CD8-positive, alpha-beta memory T cell (primary cell): ENCODE measurements at regions of chr14 and their contacts with region 1.

Region 1: GRCh38 chr14:102437997-102438915 is 71.3 kb downstream of the ANKRD9 start:
- DNase-seq: peak; percentile 49 to 68 (median 56)
- H3K4me3 ChIP-seq: no peak overlapping the region
- H3K4me3 Mint-ChIP-seq: peak overlapping the region in 1 of 7 donors; percentile 72
- H3K27ac ChIP-seq: no peak overlapping the region
- H3K27ac Mint-ChIP-seq: no peak overlapping the region
- H3K4me1 ChIP-seq: no peaks in the 10 kb centered on the region
- H3K4me1 Mint-ChIP-seq: peaks cover 0 to 3% (median 3%) of the 10 kb centered on the region in 3 donors
- H3K27me3 ChIP-seq: no peaks in the 10 kb centered on the region
- H3K27me3 Mint-ChIP-seq: peaks cover 0 to 2% of the 10 kb centered on the region in 2 donors

Region 2: DNA sequence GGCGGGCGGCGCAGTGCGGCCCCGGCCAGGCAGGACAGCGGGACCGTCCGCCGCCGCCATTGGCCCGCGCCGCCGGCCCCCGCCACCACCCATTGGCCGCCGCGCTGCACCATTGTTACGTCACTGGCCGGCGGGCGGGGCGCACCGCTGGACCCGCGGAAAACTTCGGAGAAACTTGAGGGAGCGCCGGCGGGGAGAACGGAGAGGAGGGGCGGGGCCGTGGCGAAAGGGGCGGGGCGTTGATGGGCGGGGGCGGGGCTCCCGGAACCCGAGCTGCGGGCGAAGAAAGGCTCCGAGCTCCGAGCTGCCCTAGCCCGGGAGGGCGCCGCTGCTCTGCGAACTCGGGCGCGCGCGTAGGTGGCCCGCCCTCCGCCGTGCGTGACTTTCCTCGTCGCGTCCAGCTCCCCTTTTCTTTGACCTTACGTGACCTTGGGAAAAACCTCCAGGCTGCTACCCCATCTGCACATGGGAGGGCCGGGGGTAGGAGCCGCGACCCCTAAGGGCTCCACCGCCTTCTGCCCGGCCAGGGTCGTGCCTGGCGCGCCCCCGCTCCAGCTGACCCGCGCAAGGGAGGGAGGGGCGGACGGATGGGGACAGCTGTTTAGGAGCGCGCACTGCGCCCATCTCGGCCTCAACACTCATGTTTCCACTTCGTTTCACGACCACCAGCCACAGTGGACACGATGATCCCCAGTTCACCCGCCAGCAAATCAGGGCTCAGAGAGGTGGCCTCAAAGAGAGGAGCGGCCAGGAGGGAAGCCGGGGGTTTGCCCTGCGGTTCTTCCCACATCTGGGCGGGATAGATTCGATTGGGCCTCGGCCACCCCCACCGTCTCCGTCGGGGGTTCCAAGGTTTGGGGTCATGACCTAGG is 71.7 kb after region 1 on chr14 and contains the start of gene ANKRD9:
- CTCF ChIA-PET with region 1: interaction called, 35 read pairs
- POLR2A ChIA-PET with region 1: no interaction called
- DNase-seq: peak; percentile 61 to 86 (median 76)
- H3K4me3 ChIP-seq: peak within 1 kb of the TSS; percentile 58
- H3K4me3 Mint-ChIP-seq: peak within 1 kb of the TSS; percentile 79 to 93 (median 87)
- H3K27ac ChIP-seq: peak within 1 kb of the TSS; percentile 39
- H3K27ac Mint-ChIP-seq: peak within 1 kb of the TSS; percentile 50 to 95 (median 68)
- H3K4me1 ChIP-seq: peaks cover 13% of the 10 kb centered on the region
- H3K4me1 Mint-ChIP-seq: peaks cover 8 to 23% (median 11%) of the 10 kb centered on the region in 3 donors
- H3K27me3 ChIP-seq: no peaks in the 10 kb centered on the region
- H3K27me3 Mint-ChIP-seq: peaks cover 6 to 7% of the 10 kb centered on the region in 2 donors
- total RNA-seq, gene ANKRD9: 10.1 to 12.1 TPM

Region 3: DNA sequence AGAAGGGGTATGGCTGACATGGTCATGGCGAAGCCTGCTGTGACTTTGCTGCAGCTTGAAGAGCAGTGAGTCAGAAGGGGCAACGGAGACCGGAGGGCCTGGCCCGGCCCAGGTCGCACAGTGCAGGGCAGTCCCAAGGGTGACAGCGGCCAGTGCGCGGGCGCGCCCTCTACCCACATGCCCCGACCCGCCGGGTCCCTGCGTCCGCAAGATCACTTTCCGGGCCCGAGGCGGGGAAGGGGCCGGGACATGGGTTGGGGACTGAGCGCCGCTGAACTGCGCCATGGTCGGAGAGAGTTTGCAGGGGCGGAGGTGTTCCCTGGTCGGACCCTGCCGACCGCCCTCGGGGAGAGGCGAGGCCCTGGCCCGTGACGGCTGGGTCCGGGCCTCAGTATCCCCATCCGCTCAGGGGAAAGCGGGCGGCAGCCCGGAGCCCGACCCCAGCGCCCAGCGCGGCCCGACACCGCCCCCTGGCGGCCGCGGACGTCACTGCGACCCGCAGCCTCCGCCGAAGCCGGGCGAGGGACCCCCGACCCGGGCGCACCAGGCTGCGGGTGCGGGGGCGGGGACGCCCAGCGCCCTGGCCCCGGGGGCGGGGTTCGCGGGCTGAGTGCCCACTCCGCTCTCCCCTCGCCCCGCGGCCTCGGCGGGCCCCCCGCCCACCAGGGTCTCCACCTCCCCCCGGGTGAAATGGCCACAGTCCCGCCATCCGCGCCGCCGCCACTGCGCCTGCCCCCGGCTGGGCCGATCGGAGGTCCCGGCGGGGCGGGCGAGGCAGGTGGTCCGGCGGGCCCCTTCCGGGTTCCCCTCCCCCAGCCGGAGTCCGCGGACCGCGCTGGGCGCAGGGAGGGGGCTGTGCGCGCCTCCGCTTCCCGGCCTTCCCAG is 78.5 kb after region 1 on chr14:
- CTCF ChIA-PET with region 1: interaction called, 35 read pairs
- POLR2A ChIA-PET with region 1: no interaction called
- DNase-seq: peak in 4 of 5 donors; percentile 48 to 62 (median 53)
- H3K4me3 ChIP-seq: peak overlapping the region; percentile 53
- H3K4me3 Mint-ChIP-seq: peak overlapping the region; percentile 75 to 88 (median 82)
- H3K27ac ChIP-seq: peak overlapping the region; percentile 24
- H3K27ac Mint-ChIP-seq: peak overlapping the region in 4 of 8 donors; percentile 36 to 75 (median 64)
- H3K4me1 ChIP-seq: no peaks in the 10 kb centered on the region
- H3K4me1 Mint-ChIP-seq: peaks cover 5 to 9% (median 5%) of the 10 kb centered on the region in 3 donors
- H3K27me3 ChIP-seq: peaks cover 5% of the 10 kb centered on the region
- H3K27me3 Mint-ChIP-seq: peaks cover 6 to 12% of the 10 kb centered on the region in 2 donors

Region 4: GRCh38 chr14:102524466-102525218 is 86.4 kb after region 1 on chr14:
- CTCF ChIA-PET with region 1: interaction called, 21 read pairs
- POLR2A ChIA-PET with region 1: no interaction called
- DNase-seq: peak; percentile 87 to 92 (median 91)
- H3K4me3 ChIP-seq: peak overlapping the region; percentile 71
- H3K4me3 Mint-ChIP-seq: peak overlapping the region; percentile 79 to 96 (median 89)
- H3K27ac ChIP-seq: peak overlapping the region; percentile 49
- H3K27ac Mint-ChIP-seq: peak overlapping the region; percentile 69 to 98 (median 83)
- H3K4me1 ChIP-seq: peaks cover 18% of the 10 kb centered on the region
- H3K4me1 Mint-ChIP-seq: peaks cover 22 to 31% (median 31%) of the 10 kb centered on the region in 3 donors
- H3K27me3 ChIP-seq: no peaks in the 10 kb centered on the region
- H3K27me3 Mint-ChIP-seq: no peaks in the 10 kb centered on the region